Activated CD4-positive, alpha-beta T cell treated with anti-CD3 and anti-CD28 coated beads, Interleukin-2, amount 10 ng/mL, durations not matched to agents 24 days and 14 days (primary cell): ENCODE measurements at regions of chr5 and their contacts with region 1.

Region 1: GRCh38 chr5:74865804-74866595 is at the start of gene FAM169A:
- DNase-seq: peak; percentile 81
- H3K4me3 Mint-ChIP-seq: peak within 1 kb of the TSS; percentile 81
- H3K27ac Mint-ChIP-seq: peak within 1 kb of the TSS; percentile 64
- H3K4me1 Mint-ChIP-seq: peaks cover 3% of the 10 kb centered on the region
- H3K27me3 Mint-ChIP-seq: peaks cover 24% of the 10 kb centered on the region
- total RNA-seq, gene FAM169A: 1.8 and 2.6 TPM in 2 replicates

Region 2: DNA sequence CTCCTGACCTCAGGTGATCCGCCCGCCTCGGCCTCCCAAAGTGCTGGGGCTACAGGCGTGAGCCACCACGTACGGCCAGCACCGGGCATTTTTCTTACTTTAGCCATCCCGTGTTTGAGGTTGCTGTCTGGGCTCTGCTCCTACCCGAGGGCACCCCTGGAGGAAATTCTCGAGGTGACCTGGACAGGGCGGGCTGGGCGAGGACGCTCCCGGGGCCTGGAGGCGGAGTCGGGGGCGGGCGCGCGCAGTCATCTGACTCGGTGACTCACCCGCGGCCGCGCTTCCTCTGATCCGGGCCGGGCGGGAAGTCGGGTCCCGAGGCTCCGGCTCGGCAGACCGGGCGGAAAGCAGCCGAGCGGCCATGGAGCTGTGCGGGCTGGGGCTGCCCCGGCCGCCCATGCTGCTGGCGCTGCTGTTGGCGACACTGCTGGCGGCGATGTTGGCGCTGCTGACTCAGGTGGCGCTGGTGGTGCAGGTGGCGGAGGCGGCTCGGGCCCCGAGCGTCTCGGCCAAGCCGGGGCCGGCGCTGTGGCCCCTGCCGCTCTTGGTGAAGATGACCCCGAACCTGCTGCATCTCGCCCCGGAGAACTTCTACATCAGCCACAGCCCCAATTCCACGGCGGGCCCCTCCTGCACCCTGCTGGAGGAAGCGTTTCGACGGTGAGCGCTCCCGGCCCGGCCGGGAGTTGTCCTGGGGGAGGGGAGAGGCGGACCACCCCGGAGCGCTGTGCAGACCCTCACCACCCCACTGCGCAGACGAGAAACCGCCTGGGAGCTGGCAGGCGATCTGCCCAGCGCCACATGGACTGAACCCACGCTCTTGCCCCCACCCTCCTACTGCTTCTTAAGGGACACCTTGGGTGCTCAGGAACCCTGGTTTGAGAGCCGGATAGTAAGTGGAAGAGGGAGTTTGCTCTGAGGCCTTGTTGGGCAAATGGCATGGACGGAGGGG is 180.8 kb before region 1 on chr5 and contains the start of gene HEXB:
- intact Hi-C with region 1: loop called (anchors 5 kb)
- DNase-seq: peak; percentile 96
- H3K4me3 Mint-ChIP-seq: peak within 1 kb of the TSS; percentile 90
- H3K27ac Mint-ChIP-seq: peak within 1 kb of the TSS; percentile 83
- H3K4me1 Mint-ChIP-seq: peaks cover 20% of the 10 kb centered on the region
- H3K27me3 Mint-ChIP-seq: peaks cover 13% of the 10 kb centered on the region
- total RNA-seq, gene HEXB: 60.7 and 61.2 TPM in 2 replicates

Region 3: DNA sequence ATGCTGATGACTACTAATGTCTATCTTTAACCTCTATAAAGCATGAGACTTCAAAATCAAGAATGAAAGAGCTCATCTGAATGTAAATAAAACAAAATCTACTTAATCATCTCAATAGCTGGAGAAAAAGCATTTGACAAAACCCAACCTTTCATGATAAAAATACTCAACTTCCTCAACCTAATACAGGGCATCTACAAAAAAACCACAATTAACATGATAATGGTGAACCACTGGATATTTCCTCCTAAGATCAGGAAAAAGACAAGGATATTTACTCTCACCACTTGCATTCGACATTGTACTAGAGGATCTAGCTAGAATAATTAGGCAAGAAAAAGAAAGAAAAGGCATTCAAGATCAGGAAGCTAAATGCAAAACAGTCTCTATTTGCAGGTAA is 49.1 kb before region 1 on chr5:
- intact Hi-C with region 1: loop called (anchors 1 kb)
- DNase-seq: no peak
- H3K4me3 Mint-ChIP-seq: no peak overlapping the region
- H3K27ac Mint-ChIP-seq: no peak overlapping the region
- H3K4me1 Mint-ChIP-seq: no peaks in the 10 kb centered on the region
- H3K27me3 Mint-ChIP-seq: no peaks in the 10 kb centered on the region